ENCODE measurements at regions of chr7 and their contacts with region 1.

Region 1: DNA sequence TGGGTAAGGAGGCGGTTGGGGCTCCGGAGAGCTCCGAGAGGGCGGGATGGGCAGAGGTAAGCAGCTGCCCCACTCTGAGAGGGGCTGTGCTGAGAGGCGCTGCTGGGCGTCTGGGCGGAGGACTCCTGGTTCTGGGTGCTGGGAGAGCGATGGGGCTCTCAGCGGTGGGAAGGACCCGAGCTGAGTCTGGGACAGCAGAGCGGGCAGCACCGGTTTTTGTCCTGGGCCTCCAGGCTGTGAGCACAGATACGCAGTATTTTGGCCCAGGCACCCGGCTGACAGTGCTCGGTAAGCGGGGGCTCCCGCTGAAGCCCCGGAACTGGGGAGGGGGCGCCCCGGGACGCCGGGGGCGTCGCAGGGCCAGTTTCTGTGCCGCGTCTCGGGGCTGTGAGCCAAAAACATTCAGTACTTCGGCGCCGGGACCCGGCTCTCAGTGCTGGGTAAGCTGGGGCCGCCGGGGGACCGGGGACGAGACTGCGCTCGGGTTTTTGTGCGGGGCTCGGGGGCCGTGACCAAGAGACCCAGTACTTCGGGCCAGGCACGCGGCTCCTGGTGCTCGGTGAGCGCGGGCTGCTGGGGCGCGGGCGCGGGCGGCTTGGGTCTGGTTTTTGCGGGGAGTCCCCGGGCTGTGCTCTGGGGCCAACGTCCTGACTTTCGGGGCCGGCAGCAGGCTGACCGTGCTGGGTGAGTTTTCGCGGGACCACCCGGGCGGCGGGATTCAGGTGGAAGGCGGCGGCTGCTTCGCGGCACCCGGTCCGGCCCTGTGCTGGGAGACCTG is 26.0 kb downstream of the PRSS2 start:
- DNase-seq: peak in 3 of 9 donors; percentile 25 to 45 (median 40)
- ATAC-seq: peak; percentile 2
- H3K4me3 ChIP-seq: peak overlapping the region; percentile 83
- H3K4me3 Mint-ChIP-seq: peak overlapping the region; percentile 95 to 100 (median 99)
- H3K27ac ChIP-seq: peak overlapping the region; percentile 98
- H3K27ac Mint-ChIP-seq: peak overlapping the region; percentile 99 to 100 (median 100)
- H3K4me1 ChIP-seq: peaks cover 43 to 45% of the 10 kb centered on the region in 2 donors
- H3K4me1 Mint-ChIP-seq: peaks cover 29 to 70% (median 67%) of the 10 kb centered on the region in 7 donors
- H3K27me3 ChIP-seq: no peaks in the 10 kb centered on the region
- H3K27me3 Mint-ChIP-seq: peaks cover 0 to 2% (median 0%) of the 10 kb centered on the region in 5 donors

Region 2: DNA sequence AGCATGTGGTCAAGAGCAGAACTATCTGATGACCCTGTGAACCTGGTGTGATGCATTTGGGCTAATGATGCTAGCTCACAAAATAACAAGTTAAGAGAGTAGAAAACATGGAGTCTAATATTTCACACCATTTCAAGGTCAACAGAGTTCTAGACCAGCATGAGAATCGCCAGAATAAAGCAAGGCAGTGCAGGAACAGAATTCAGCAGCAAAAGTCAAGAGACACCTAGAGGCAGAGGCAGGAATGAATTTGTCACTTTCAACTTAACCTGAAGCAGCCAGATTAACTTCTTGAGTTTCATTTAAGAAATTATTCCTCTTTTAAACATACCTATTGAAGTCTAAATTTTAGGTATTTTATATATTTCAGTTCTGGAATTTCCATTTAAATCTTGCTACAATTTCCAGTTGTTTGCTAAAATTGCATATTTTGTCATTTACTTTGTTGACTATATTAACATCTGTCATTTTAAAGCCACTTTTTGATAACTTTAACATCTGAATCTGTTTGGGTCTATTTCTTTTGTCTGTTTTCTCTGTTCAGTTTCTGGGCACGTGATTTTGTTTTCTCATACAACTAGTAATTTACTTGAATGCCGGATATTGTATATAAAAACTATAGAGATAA is 494.8 kb before region 1 on chr7:
- CTCF ChIA-PET with region 1: interaction called, 5 read pairs
- POLR2A ChIA-PET with region 1: interaction called, 34 read pairs
- intact Hi-C with region 1: no loop called
- DNase-seq: peak in 1 of 9 donors; percentile 34
- ATAC-seq: no peak
- H3K4me3 ChIP-seq: no peak overlapping the region
- H3K4me3 Mint-ChIP-seq: peak overlapping the region in 2 of 10 donors; percentile 17 to 49
- H3K27ac ChIP-seq: no peak overlapping the region
- H3K27ac Mint-ChIP-seq: no peak overlapping the region
- H3K4me1 ChIP-seq: peaks cover 0 to 28% of the 10 kb centered on the region in 2 donors
- H3K4me1 Mint-ChIP-seq: peaks cover 7 to 52% (median 35%) of the 10 kb centered on the region in 7 donors
- H3K27me3 ChIP-seq: no peaks in the 10 kb centered on the region
- H3K27me3 Mint-ChIP-seq: peaks cover 4 to 25% (median 16%) of the 10 kb centered on the region in 5 donors

Region 3: GRCh38 chr7:142352543-142352942 is 444.3 kb before region 1 on chr7:
- CTCF ChIA-PET with region 1: no interaction called
- POLR2A ChIA-PET with region 1: interaction called, 66 read pairs
- intact Hi-C with region 1: no loop called
- DNase-seq: peak in 1 of 9 donors; percentile 17
- ATAC-seq: peak; percentile 64
- H3K4me3 ChIP-seq: peak overlapping the region; percentile 37
- H3K4me3 Mint-ChIP-seq: peak overlapping the region; percentile 38 to 85 (median 74)
- H3K27ac ChIP-seq: peak overlapping the region; percentile 64
- H3K27ac Mint-ChIP-seq: peak overlapping the region; percentile 13 to 90 (median 82)
- H3K4me1 ChIP-seq: peaks cover 3 to 23% of the 10 kb centered on the region in 2 donors
- H3K4me1 Mint-ChIP-seq: peaks cover 12 to 53% (median 42%) of the 10 kb centered on the region in 7 donors
- H3K27me3 ChIP-seq: no peaks in the 10 kb centered on the region
- H3K27me3 Mint-ChIP-seq: peaks cover 0 to 13% (median 0%) of the 10 kb centered on the region in 5 donors

Region 4: DNA sequence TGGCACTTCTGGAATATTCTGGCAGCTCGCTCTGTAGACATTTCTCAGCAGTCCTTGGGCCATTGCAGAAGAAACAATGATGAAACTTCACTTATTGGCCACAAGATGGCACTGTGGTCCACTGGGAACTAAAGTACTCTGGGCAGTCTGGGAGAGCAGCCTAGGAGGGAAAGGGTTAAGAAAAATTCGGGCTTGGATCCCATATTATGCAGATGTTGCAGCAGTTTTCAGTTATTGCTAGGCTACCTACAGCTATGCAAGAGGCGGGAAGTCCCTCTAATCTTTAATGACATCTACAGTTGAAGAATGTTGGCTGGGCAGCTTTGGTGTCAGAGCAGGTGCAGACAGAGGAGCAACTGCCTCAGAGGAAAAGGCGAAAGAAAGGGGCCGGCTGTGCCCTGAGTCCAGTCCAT is 337.2 kb before region 1 on chr7:
- CTCF ChIA-PET with region 1: no interaction called
- POLR2A ChIA-PET with region 1: interaction called, 32 read pairs
- intact Hi-C with region 1: no loop called
- DNase-seq: peak in 5 of 9 donors; percentile 19 to 42 (median 34)
- ATAC-seq: peak; percentile 72
- H3K4me3 ChIP-seq: no peak overlapping the region
- H3K4me3 Mint-ChIP-seq: peak overlapping the region; percentile 12 to 83 (median 47)
- H3K27ac ChIP-seq: peak overlapping the region; percentile 46
- H3K27ac Mint-ChIP-seq: peak overlapping the region; percentile 24 to 92 (median 67)
- H3K4me1 ChIP-seq: peaks cover 4 to 42% of the 10 kb centered on the region in 2 donors
- H3K4me1 Mint-ChIP-seq: peaks cover 38 to 86% (median 81%) of the 10 kb centered on the region in 7 donors
- H3K27me3 ChIP-seq: no peaks in the 10 kb centered on the region
- H3K27me3 Mint-ChIP-seq: peaks cover 0 to 7% (median 0%) of the 10 kb centered on the region in 5 donors

Region 5: GRCh38 chr7:142535123-142535779 is 261.5 kb before region 1 on chr7:
- CTCF ChIA-PET with region 1: interaction called, 4 read pairs
- POLR2A ChIA-PET with region 1: interaction called, 52 read pairs
- intact Hi-C with region 1: no loop called
- DNase-seq: peak; percentile 40 to 78 (median 68)
- ATAC-seq: peak; percentile 93
- H3K4me3 ChIP-seq: peak overlapping the region; percentile 10
- H3K4me3 Mint-ChIP-seq: peak overlapping the region; percentile 54 to 87 (median 70)
- H3K27ac ChIP-seq: peak overlapping the region; percentile 47
- H3K27ac Mint-ChIP-seq: peak overlapping the region; percentile 61 to 91 (median 77)
- H3K4me1 ChIP-seq: peaks cover 3 to 31% of the 10 kb centered on the region in 2 donors
- H3K4me1 Mint-ChIP-seq: peaks cover 4 to 38% (median 31%) of the 10 kb centered on the region in 7 donors
- H3K27me3 ChIP-seq: no peaks in the 10 kb centered on the region
- H3K27me3 Mint-ChIP-seq: peaks cover 0 to 5% (median 0%) of the 10 kb centered on the region in 5 donors

Region 6: DNA sequence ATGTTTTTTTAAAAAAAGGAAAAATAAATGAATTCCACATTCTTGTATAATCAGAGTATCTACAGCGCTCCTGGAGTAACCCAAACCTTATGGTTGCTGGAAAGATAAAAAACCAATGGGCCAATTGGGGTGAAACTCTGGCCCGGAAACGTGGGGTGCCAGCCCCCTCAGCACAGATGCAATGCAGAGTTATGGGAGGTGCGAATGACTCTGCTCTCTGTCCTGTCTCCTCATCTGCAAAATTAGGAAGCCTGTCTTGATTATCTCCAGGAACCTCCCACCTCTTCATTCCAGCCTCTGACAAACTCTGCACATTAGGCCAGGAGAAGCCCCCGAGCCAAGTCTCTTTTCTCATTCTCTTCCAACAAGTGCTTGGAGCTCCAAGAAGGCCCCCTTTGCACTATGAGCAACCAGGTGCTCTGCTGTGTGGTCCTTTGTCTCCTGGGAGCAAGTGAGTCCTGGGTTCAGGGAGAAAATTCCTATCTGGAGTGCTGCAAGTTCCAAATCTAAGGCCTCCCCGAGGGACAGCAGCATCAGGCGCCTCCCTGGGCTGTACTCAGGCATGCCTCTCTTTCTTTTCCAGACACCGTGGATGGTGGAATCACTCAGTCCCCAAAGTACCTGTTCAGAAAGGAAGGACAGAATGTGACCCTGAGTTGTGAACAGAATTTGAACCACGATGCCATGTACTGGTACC is 178.0 kb before region 1 on chr7:
- CTCF ChIA-PET with region 1: no interaction called
- POLR2A ChIA-PET with region 1: interaction called, 40 read pairs
- intact Hi-C with region 1: loop called (anchors 5 kb)
- DNase-seq: no peak
- ATAC-seq: no peak
- H3K4me3 ChIP-seq: peak overlapping the region; percentile 36
- H3K4me3 Mint-ChIP-seq: peak overlapping the region; percentile 55 to 82 (median 68)
- H3K27ac ChIP-seq: peak overlapping the region; percentile 65
- H3K27ac Mint-ChIP-seq: peak overlapping the region in 8 of 9 donors; percentile 68 to 81 (median 74)
- H3K4me1 ChIP-seq: no peaks in the 10 kb centered on the region
- H3K4me1 Mint-ChIP-seq: peaks cover 0 to 17% (median 7%) of the 10 kb centered on the region in 7 donors
- H3K27me3 ChIP-seq: no peaks in the 10 kb centered on the region
- H3K27me3 Mint-ChIP-seq: peaks cover 0 to 27% (median 4%) of the 10 kb centered on the region in 5 donors

Region 7: GRCh38 chr7:142782922-142783900 is 13.6 kb before region 1 on chr7:
- CTCF ChIA-PET with region 1: interaction called, 26 read pairs
- POLR2A ChIA-PET with region 1: interaction called, 5,102 read pairs
- intact Hi-C with region 1: loop called (anchors 1 kb)
- DNase-seq: peak; percentile 54 to 84 (median 77)
- ATAC-seq: peak; percentile 74
- H3K4me3 ChIP-seq: peak overlapping the region; percentile 52
- H3K4me3 Mint-ChIP-seq: peak overlapping the region; percentile 70 to 99 (median 86)
- H3K27ac ChIP-seq: peak overlapping the region; percentile 98
- H3K27ac Mint-ChIP-seq: peak overlapping the region; percentile 75 to 100 (median 99)
- H3K4me1 ChIP-seq: peaks cover 0 to 5% of the 10 kb centered on the region in 2 donors
- H3K4me1 Mint-ChIP-seq: peaks cover 0 to 16% (median 10%) of the 10 kb centered on the region in 7 donors
- H3K27me3 ChIP-seq: no peaks in the 10 kb centered on the region
- H3K27me3 Mint-ChIP-seq: no peaks in the 10 kb centered on the region

Region 8: DNA sequence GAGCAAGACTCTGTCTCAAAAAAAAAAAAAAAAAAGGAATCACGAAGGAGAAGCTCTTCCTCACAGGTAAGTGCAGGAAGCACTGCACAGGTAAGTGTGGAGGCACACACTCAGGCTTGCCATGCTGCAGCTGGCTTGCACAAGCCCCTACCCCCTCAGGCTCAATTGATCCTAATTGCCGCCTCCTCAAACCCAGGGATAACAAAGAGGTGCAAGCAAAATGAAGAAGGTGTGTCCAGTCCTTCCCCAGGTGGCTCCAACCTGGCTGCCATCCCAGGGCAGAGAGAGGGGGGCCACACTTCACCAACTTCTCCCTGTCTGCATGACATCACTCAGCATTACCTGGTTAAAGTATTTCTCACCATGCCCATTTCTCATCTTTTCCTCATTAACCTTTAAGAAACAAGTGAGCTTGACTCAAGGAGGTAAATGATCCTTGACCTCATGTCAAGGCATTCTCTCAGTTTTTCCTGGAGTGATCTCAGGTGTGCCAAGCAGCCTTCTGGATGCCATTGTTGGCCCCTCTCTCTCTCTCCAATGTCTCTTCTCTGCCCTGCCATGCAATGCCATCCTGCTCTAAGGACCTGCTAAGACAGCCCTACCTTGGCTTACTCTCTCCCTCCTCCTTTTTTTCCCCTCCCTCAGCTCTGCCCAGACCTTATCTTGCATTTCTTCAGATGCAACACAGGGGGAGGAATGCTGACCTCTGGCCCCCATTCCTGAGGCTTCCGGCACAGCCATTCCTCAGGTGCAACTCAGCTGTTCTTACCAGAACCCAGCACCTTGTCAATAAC is 101.8 kb after region 1 on chr7:
- CTCF ChIA-PET with region 1: no interaction called
- POLR2A ChIA-PET with region 1: no interaction called
- intact Hi-C with region 1: no loop called
- DNase-seq: no peak
- ATAC-seq: no peak
- H3K4me3 ChIP-seq: no peak overlapping the region
- H3K4me3 Mint-ChIP-seq: no peak overlapping the region
- H3K27ac ChIP-seq: no peak overlapping the region
- H3K27ac Mint-ChIP-seq: peak overlapping the region in 1 of 9 donors; percentile 5
- H3K4me1 ChIP-seq: no peaks in the 10 kb centered on the region
- H3K4me1 Mint-ChIP-seq: no peaks in the 10 kb centered on the region
- H3K27me3 ChIP-seq: no peaks in the 10 kb centered on the region
- H3K27me3 Mint-ChIP-seq: peaks cover 0 to 26% (median 4%) of the 10 kb centered on the region in 5 donors